Natural killer cell (primary cell): ENCODE measurements at regions of chr9 and their contacts with region 1.

Region 1: GRCh38 chr9:32571969-32572899 is 725 bp downstream of the NDUFB6 start:
- DNase-seq: peak; percentile 55 to 90
- ATAC-seq: peak; percentile 82 to 95 (median 87)
- H3K4me3 ChIP-seq: peak overlapping the region; percentile 79
- H3K4me3 Mint-ChIP-seq: peak overlapping the region; percentile 100
- H3K27ac ChIP-seq: peak overlapping the region; percentile 88
- H3K27ac Mint-ChIP-seq: peak overlapping the region; percentile 99
- H3K4me1 ChIP-seq: peaks cover 9% of the 10 kb centered on the region
- H3K4me1 Mint-ChIP-seq: peaks cover 27 to 30% of the 10 kb centered on the region in 2 donors
- H3K27me3 ChIP-seq: no peaks in the 10 kb centered on the region
- H3K27me3 Mint-ChIP-seq: peaks cover 4 to 12% of the 10 kb centered on the region in 2 donors
- CTCF ChIP-seq: peak; percentile 77

Region 2: DNA sequence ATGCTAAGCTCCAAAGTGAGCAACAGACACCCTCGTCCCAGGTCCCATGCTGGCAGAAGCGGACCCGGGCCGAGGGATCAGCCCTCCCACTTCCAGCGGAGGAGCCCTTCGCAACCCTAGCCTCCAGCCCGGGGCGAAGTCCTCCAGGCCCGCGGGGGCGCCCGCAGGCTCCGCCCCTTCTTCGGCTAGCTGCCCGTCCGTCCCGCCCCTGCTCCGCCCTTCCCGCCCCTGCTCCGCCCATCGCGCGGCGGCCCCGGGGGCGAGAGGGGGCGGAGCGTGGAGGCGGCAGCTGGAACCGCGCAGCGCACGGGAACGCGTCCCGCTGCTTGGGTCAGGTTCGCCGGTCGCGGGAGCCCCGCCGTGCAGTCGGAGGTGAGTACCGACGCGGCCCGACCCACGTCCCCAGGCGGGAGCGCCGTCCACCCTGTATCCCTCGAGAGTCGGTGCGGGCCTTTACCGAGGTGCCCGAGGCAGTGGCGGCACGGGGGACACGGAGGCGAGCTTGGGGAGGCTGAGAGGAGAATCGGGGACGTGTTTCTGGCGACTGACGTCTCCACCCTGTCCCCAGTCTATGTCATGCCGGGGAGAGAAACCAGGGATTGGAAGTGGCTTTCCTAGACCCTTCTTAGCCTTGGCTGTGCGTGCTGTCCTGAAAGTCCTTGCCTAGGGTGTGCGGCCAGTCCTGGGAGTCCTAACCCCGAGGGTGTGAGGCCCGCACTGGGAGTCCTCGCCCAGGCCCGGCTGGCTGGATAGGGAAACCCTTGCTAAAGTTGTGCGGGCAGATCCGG is 187.7 kb before region 1 on chr9 and contains the start of gene ACO1:
- intact Hi-C with region 1: loop called (anchors 1 kb)
- DNase-seq: peak; percentile 86 to 93
- ATAC-seq: peak; percentile 97 to 98 (median 98)
- H3K4me3 ChIP-seq: peak within 1 kb of the TSS; percentile 69
- H3K4me3 Mint-ChIP-seq: peak within 1 kb of the TSS; percentile 85
- H3K27ac ChIP-seq: peak within 1 kb of the TSS; percentile 23
- H3K27ac Mint-ChIP-seq: peak within 1 kb of the TSS in 1 of 2 donors; percentile 63
- H3K4me1 ChIP-seq: peaks cover 14% of the 10 kb centered on the region
- H3K4me1 Mint-ChIP-seq: peaks cover 5 to 12% of the 10 kb centered on the region in 2 donors
- H3K27me3 ChIP-seq: peaks cover 8% of the 10 kb centered on the region
- H3K27me3 Mint-ChIP-seq: peaks cover 12 to 32% of the 10 kb centered on the region in 2 donors
- CTCF ChIP-seq: no peak
- total RNA-seq, gene ACO1: 5.8 to 7.4 (median 6.9) TPM

Region 3: GRCh38 chr9:32508728-32509127 is 63.5 kb before region 1 on chr9:
- intact Hi-C with region 1: loop called (anchors 5 kb)
- DNase-seq: no peak
- ATAC-seq: no peak
- H3K4me3 ChIP-seq: no peak overlapping the region
- H3K4me3 Mint-ChIP-seq: no peak overlapping the region
- H3K27ac ChIP-seq: no peak overlapping the region
- H3K27ac Mint-ChIP-seq: no peak overlapping the region
- H3K4me1 ChIP-seq: no peaks in the 10 kb centered on the region
- H3K4me1 Mint-ChIP-seq: peaks cover 46 to 65% of the 10 kb centered on the region in 2 donors
- H3K27me3 ChIP-seq: no peaks in the 10 kb centered on the region
- H3K27me3 Mint-ChIP-seq: no peaks in the 10 kb centered on the region
- CTCF ChIP-seq: no peak

Region 4: GRCh38 chr9:32526041-32526706 is 46.1 kb before region 1 on chr9 and contains the start of gene RIGI:
- intact Hi-C with region 1: loop called (anchors 1 kb)
- DNase-seq: peak; percentile 72 to 93
- ATAC-seq: peak; percentile 80 to 84 (median 82)
- H3K4me3 ChIP-seq: peak within 1 kb of the TSS; percentile 92
- H3K4me3 Mint-ChIP-seq: peak within 1 kb of the TSS; percentile 93
- H3K27ac ChIP-seq: peak within 1 kb of the TSS; percentile 87
- H3K27ac Mint-ChIP-seq: peak within 1 kb of the TSS; percentile 79 to 96
- H3K4me1 ChIP-seq: peaks cover 12% of the 10 kb centered on the region
- H3K4me1 Mint-ChIP-seq: peaks cover 53 to 56% of the 10 kb centered on the region in 2 donors
- H3K27me3 ChIP-seq: no peaks in the 10 kb centered on the region
- H3K27me3 Mint-ChIP-seq: no peaks in the 10 kb centered on the region
- CTCF ChIP-seq: no peak
- total RNA-seq, gene RIGI: 13.8 to 21.3 (median 15.7) TPM

Region 5: GRCh38 chr9:32550562-32551433 is 21.4 kb before region 1 on chr9:
- intact Hi-C with region 1: loop called (anchors 1 kb)
- DNase-seq: peak; percentile 92 to 97
- ATAC-seq: peak; percentile 81 to 93 (median 88)
- H3K4me3 ChIP-seq: peak overlapping the region; percentile 92
- H3K4me3 Mint-ChIP-seq: peak overlapping the region; percentile 98
- H3K27ac ChIP-seq: peak overlapping the region; percentile 95
- H3K27ac Mint-ChIP-seq: peak overlapping the region; percentile 97 to 99
- H3K4me1 ChIP-seq: peaks cover 24% of the 10 kb centered on the region
- H3K4me1 Mint-ChIP-seq: peaks cover 43 to 52% of the 10 kb centered on the region in 2 donors
- H3K27me3 ChIP-seq: no peaks in the 10 kb centered on the region
- H3K27me3 Mint-ChIP-seq: no peaks in the 10 kb centered on the region
- CTCF ChIP-seq: no peak

Region 6: GRCh38 chr9:33220681-33221567 is 648.7 kb after region 1 on chr9:
- intact Hi-C with region 1: no loop called
- DNase-seq: no peak
- ATAC-seq: peak in 1 of 3 donors; percentile 28
- H3K4me3 ChIP-seq: no peak overlapping the region
- H3K4me3 Mint-ChIP-seq: no peak overlapping the region
- H3K27ac ChIP-seq: peak overlapping the region; percentile 16
- H3K27ac Mint-ChIP-seq: peak overlapping the region in 1 of 2 donors; percentile 29
- H3K4me1 ChIP-seq: peaks cover 15% of the 10 kb centered on the region
- H3K4me1 Mint-ChIP-seq: peaks cover 8 to 17% of the 10 kb centered on the region in 2 donors
- H3K27me3 ChIP-seq: no peaks in the 10 kb centered on the region
- H3K27me3 Mint-ChIP-seq: no peaks in the 10 kb centered on the region
- CTCF ChIP-seq: no peak